Cardiac septum (tissue), 1 donor: ENCODE measurements at regions of chr10 and their contacts with region 1.

Region 1: GRCh38 chr10:119686439-119687191 is 35.4 kb downstream of the BAG3 start:
- DNase-seq: peak; percentile 91

Region 2: GRCh38 chr10:119368991-119369869 is 317.4 kb before region 1 on chr10:
- intact Hi-C with region 1: no loop called
- DNase-seq: no peak

Region 3: DNA sequence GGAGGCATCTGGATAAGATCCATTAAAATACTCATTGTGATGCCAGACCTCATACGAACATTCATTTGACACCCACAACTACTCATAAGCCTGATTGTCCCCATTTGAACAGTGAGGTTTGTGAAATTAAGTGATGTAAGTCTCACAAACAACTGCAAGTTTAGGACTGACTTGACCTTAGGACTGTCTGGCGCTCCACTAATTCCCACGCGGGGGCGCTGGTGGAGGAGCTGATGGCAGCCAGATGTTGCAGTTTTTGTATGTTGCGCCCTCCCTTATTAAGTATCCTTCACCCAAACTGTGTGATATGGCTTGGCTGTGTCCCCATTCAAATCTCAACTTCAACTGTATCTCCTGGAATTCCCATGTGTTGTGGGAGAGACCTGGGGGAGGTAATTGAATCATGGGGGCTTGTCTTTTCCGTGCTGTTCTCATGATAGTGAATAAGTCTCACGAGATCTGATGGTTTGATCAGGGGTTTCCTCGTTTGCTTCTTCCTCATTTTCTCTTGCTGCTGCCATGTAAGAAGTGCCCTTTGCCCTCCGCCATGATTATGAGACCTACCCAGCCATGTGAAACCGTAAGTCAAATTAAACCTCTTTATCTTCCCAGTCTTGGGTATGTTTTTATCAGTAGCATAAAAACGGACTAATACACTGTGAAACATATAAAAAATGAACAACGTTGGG is 69.6 kb before region 1 on chr10:
- intact Hi-C with region 1: loop called (anchors 5 kb)
- DNase-seq: no peak

Region 4: GRCh38 chr10:119725828-119726675 is 39.4 kb after region 1 on chr10 and contains the start of gene INPP5F:
- intact Hi-C with region 1: loop called (anchors 5 kb)
- DNase-seq: peak; percentile 100
- total RNA-seq, gene INPP5F: 20.2 TPM

Region 5: DNA sequence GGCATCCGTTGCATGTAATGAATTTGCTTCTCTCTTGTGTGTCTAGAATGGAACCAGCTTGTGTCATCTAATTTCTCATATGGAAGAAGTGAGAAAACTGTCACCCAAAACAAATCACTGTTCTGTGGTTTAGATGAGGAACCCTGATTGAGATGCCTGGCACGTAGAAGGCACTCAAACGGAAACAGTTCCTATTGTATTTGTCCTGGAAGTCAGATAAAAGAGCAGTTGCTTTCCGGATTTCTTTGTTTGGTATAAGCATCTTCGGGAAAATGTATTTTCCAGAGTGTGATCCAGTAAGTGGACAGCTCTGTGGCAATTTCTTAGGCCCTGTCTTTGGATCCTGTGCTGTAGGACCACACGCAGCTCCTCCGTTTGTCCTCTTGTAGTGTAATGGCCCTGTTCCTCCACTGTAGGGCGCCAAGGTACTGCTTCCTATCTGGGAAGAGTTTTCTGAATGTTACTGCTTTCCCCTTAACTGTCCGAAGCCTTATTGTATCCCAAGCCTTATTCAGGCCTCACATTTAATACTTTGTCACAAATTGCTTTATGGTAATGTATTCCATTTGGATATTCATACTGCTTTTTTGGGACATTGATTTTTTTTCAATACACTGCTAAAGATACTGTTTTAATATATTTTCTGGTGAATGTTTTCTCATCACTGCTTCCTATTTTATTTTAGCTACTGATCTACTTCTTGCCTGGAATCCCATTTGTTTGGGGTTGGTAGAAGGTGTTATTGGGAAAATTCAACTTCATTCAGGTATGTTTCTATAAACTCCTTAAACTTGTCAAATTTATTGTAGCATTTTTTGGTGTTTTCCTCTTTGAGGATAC is 64.0 kb after region 1 on chr10:
- intact Hi-C with region 1: loop called (anchors 5 kb)
- DNase-seq: peak; percentile 81

Region 6: DNA sequence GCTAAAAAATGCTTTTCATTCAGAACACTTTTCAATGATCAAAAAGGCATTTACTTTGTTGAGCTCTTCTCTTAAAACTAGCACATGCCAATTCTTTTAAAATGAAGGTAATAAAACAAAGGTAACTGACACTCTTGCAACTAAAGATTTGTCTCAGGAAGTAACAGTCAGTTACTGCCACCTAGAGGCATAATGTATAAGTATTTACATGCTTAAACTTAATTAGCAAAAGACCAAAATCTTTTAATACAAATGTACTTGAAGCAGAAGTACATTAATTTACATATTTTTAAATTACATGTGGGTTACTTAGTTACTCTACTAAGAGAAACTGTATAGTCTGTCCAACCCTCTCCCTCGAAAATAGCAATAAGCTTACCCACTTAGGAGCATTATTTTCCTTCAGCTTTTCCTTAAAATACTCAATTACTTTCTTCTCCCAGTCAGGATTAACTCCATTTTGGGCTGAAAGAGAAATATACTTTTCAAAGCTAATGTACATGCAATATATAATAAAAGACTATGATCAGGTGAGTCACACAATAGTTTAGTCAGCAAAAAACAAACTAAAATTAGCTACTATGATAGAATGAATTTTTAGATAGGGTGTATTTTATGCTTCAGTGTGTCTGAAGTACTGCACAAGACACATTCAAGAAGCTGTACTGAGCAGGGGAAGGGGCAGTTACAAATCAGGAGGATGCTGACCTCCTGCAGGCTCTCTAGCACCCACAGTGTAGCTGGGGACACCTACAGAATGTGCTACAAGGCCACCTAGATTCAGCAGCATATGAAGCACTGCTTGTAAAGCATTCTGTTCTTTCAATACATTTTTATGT is 173.0 kb after region 1 on chr10:
- intact Hi-C with region 1: loop called (anchors 10 kb)
- DNase-seq: no peak

Region 7: DNA sequence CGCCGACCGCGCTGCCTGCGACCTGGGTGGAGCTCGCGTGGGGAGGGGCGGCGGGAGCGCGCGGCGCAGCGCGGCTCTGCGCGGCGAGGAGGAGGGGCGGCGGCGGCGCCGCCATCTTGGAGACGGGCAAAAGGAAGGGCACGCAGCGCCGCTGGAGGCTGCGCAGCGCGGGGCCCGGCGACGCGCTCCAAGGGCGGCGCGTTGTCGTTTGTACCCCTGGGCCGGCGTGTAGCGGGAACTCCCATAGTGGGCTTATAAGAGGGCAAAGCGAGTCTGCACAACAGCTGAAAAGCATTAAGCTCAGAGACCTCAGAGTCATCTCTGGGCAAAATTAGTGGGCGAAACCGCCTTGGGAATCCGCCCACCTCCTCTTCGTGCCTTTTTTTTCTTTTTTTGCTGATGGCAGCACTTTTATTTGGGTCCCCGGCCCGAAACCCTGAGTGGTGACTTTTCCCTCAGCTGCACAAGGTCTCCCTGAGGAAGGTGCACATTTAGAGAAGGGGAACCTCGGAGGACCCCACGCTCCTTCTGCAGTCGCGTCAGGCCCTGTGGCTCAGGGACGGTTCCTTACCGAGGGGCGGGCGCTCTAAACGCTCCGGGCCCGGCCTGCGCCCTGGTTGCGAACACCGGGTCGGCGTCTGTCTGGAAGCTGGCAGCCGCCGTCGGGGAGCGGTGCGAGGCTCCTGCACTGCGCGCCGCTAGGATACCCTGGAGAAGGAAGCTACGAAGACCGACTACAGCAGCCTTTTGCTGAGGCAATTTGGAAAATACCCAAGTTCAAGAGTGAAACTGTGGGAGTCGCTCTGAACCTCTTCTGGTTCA is 186.5 kb after region 1 on chr10:
- intact Hi-C with region 1: loop called (anchors 5 kb)
- DNase-seq: peak; percentile 96